ENCODE measurements at regions of chr10 and their contacts with region 1.

Region 1: DNA sequence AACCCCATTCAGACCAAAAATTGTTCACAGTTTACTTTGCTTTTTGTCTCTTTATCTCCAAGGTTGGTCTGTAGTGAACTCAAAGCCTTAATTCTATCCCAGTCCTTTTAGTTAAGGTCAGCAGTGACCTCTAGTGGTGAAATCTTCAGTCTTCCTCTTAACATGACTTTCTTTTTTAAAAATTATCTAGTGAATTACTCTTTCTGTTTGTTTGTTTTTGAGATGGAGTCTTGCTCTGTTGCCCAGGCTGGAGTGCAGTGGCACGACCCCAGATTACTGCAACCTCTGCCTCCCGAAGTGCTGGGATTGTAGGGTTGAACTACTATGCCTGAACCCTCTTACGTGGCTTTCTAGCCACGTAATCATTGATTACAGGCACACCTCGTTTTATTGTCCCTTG is 25.0 kb downstream of the ZNF487 start:
- DNase-seq: peak; percentile 66
- H3K4me3 ChIP-seq: no peak overlapping the region
- H3K27ac ChIP-seq: no peak overlapping the region
- H3K27me3 ChIP-seq: no peaks in the 10 kb centered on the region
- CTCF ChIP-seq: peak; percentile 70

Region 2: DNA sequence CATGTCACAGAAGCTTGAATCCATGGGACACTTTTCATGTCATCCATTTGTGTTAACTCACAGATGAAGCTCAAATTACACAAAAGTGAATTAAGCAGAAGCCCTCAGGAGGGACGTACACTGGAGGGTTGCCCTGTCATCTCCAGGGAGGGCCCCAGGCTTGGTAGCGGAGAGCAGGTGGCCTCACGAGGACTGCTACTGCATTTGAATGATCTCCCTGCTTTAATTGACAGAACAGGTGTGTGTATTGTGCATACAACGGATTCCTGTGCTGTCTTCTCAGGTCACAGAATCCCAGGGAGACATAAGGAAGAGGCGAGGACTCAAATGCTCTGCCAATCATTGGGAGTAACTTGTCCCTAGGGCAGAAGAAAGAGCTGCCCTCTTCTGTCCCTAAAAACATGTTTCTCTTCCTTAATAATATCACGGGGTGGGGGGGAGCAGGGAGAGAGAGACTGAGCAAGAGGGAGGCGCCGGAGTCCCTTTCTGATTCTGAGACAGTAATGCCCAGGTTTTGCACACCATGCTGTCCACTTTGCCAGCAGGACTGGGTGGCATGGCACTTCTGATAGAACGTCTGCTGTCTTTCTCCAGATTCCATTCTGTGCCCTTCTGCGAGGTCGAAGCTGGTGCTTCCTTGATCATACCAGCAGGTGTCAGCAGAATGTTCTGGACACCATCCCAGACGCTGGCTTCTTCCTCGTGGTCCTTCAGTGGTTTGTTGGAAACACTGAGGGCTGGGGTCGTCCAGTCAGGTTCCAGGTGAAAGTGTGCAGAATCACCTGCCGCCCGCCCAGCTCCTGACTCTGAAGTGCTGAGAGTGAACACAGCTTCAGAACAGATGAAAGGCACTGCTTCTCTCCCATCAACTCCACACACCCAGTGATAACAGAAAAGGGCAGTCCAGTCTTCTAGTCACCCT is 168.9 kb before region 1 on chr10:
- CTCF ChIA-PET with region 1: interaction called, 56 read pairs
- POLR2A ChIA-PET with region 1: interaction called, 3 read pairs
- DNase-seq: peak; percentile 20
- H3K4me3 ChIP-seq: no peak overlapping the region
- H3K27ac ChIP-seq: no peak overlapping the region
- H3K27me3 ChIP-seq: peaks cover 8% of the 10 kb centered on the region
- CTCF ChIP-seq: peak; percentile 72

Region 3: GRCh38 chr10:43348511-43349312 is 113.2 kb before region 1 on chr10:
- CTCF ChIA-PET with region 1: interaction called, 12 read pairs
- POLR2A ChIA-PET with region 1: no interaction called
- DNase-seq: peak; percentile 37
- H3K4me3 ChIP-seq: no peak overlapping the region
- H3K27ac ChIP-seq: no peak overlapping the region
- H3K27me3 ChIP-seq: peaks cover 19% of the 10 kb centered on the region
- CTCF ChIP-seq: peak; percentile 95

Region 4: GRCh38 chr10:43390759-43391158 is 71.2 kb before region 1 on chr10:
- CTCF ChIA-PET with region 1: interaction called, 17 read pairs
- POLR2A ChIA-PET with region 1: no interaction called
- DNase-seq: no peak
- H3K4me3 ChIP-seq: no peak overlapping the region
- H3K27ac ChIP-seq: no peak overlapping the region
- H3K27me3 ChIP-seq: no peaks in the 10 kb centered on the region
- CTCF ChIP-seq: peak; percentile 69